ENCODE measurements at regions of chr10 and their contacts with region 1.

Region 1: DNA sequence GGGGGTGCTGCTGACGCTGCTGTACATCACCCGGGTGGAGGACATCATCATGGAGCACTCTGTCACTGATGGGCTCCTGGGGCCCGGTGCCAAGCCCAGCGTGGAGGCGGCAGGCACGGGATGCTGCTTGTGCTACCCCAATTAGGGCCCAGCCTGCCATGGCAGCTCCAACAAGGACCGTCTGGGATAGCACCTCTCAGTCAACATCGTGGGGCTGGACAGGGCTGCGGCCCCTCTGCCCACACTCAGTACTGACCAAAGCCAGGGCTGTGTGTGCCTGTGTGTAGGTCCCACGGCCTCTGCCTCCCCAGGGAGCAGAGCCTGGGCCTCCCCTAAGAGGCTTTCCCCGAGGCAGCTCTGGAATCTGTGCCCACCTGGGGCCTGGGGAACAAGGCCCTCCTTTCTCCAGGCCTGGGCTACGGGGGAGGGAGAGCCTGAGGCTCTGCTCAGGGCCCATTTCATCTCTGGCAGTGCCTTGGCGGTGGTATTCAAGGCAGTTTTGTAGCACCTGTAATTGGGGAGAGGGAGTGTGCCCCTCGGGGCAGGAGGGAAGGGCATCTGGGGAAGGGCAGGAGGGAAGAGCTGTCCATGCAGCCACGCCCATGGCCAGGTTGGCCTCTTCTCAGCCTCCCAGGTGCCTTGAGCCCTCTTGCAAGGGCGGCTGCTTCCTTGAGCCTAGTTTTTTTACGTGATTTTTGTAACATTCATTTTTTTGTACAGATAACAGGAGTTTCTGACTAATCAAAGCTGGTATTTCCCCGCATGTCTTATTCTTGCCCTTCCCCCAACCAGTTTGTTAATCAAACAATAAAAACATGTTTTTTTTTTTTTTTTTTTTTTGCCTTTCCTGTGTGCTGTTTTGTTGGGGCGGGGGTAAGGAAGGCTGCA is 55.8 kb downstream of the TSPAN15 start:
- DNase-seq: peak in 1 of 2 experiments; percentile 27
- ATAC-seq: peak; percentile 42 to 48
- H3K4me3 ChIP-seq: peak overlapping the region; percentile 25; the same call in 2 of the 3 replicates
- H3K27ac ChIP-seq: peak overlapping the region; percentile 65 to 91
- H3K4me1 ChIP-seq: peaks cover 13% of the 10 kb centered on the region
- CTCF ChIP-seq: no peak
- EP300 ChIP-seq: no peak
- POLR2A ChIP-seq: no peak
- RAD21 ChIP-seq: no peak

Region 2: DNA sequence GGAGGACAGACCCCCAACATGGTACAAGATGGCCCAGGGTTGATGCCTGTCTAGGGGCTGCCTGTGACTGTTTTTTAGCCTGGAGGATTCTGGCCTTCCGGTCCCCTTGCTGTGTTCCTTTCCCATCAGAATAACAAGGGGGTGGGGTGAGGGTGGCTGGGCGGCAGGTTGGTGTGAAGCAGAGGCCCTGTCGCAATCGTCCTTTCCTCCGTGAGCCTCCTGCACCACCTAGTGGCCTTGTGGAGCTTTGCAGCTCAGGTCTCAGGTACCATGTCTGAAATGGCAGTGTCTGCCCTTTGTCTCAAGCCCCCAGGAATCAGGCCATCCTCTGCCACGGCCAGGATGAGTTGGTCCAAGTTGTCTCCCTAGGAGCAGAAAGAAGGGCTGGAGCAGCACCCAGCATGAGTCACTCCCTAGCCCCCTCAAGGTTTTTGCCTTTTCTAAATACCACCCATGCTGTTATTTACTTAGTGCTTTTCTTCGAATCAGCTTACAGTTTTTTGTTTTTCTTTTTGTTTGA is 114.5 kb before region 1 on chr10:
- CTCF ChIA-PET with region 1: interaction called, 15 read pairs
- POLR2A ChIA-PET with region 1: no interaction called
- DNase-seq: peak; percentile 85 to 87
- ATAC-seq: peak; percentile 86 to 94
- H3K4me3 ChIP-seq: no peak overlapping the region
- H3K27ac ChIP-seq: peak overlapping the region; percentile 48 to 72; a peak in 4 of 6 replicates
- H3K4me1 ChIP-seq: peaks cover 21% of the 10 kb centered on the region
- CTCF ChIP-seq: peak; percentile 94
- EP300 ChIP-seq: no peak
- POLR2A ChIP-seq: no peak
- RAD21 ChIP-seq: peak; percentile 99

Region 3: DNA sequence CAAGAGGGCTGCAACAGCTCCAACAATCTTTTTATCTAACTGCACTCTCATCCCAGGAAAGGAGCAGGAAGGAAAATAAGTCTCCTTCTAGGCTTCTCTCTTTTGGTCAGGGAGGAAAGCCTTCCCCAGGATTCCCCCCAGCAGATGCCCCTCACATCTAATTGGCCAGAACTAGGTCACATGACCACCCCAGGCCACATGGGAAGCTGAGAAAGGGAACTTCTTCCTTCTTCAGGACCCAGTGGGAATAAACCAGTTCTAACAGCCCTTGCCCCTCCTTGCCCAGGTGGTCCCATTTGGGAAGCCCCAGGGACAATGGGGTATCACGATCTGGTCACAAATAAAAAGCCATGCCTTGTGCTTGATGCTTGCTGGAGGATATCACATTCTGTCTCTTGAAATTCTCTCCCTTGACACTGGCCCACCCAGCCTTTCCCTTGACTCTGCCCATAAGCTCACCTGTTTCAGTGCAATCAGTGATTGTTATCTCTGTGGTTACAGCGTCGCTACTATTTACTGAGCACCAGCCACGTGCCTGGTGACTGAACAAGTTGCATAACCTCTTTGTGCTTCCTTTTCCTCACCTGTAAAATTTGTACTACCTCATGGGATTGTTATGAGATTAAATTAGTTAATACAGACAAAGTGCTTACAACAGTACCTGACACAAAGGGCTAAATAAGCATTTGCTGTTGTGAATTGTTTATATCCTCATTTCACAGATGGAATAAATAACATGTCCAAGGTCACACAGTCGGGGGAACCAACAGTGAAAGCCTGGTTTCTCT is 81.4 kb before region 1 on chr10:
- CTCF ChIA-PET with region 1: interaction called, 90 read pairs
- POLR2A ChIA-PET with region 1: no interaction called
- DNase-seq: no peak
- ATAC-seq: no peak
- H3K4me3 ChIP-seq: no peak overlapping the region
- H3K27ac ChIP-seq: peak overlapping the region; percentile 45 to 50
- H3K4me1 ChIP-seq: peaks cover 20% of the 10 kb centered on the region
- CTCF ChIP-seq: no peak
- EP300 ChIP-seq: no peak
- POLR2A ChIP-seq: no peak
- RAD21 ChIP-seq: no peak

Region 4: DNA sequence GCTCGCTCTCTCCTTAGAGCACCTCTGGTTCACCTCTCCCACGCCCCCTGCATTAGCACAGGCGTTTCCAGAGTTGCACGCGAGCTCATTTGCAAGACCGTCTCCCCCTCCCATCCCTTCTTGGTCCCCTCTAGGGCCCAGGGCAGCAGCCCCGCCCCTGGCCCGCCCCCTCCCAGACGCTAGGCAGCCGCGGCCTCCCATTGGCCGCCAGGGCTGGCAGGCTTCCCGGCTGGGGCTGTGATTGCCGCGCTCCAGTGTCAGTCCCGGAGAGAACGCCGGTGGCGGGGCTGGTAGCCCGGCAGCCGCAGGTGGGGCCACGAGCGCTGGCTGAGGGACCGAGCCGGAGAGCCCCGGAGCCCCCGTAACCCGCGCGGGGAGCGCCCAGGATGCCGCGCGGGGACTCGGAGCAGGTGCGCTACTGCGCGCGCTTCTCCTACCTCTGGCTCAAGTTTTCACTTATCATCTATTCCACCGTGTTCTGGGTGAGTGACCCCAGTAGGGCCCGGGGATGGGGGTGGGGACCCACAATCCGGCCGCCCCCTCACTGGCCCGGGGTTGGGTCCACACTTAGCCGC is 55.8 kb before region 1 on chr10 and contains the start of gene TSPAN15:
- CTCF ChIA-PET with region 1: interaction called, 50 read pairs
- POLR2A ChIA-PET with region 1: interaction called, 5 read pairs
- DNase-seq: peak; percentile 78 to 94
- ATAC-seq: peak; percentile 84 to 85
- H3K4me3 ChIP-seq: peak within 1 kb of the TSS; percentile 78
- H3K27ac ChIP-seq: peak within 1 kb of the TSS; percentile 92 to 94
- H3K4me1 ChIP-seq: peaks cover 74% of the 10 kb centered on the region
- CTCF ChIP-seq: no peak
- EP300 ChIP-seq: no peak
- POLR2A ChIP-seq: peak; percentile 39
- RAD21 ChIP-seq: no peak
- polyA plus RNA-seq, gene TSPAN15: 89.0 and 89.6 TPM in 2 replicates

Region 5: DNA sequence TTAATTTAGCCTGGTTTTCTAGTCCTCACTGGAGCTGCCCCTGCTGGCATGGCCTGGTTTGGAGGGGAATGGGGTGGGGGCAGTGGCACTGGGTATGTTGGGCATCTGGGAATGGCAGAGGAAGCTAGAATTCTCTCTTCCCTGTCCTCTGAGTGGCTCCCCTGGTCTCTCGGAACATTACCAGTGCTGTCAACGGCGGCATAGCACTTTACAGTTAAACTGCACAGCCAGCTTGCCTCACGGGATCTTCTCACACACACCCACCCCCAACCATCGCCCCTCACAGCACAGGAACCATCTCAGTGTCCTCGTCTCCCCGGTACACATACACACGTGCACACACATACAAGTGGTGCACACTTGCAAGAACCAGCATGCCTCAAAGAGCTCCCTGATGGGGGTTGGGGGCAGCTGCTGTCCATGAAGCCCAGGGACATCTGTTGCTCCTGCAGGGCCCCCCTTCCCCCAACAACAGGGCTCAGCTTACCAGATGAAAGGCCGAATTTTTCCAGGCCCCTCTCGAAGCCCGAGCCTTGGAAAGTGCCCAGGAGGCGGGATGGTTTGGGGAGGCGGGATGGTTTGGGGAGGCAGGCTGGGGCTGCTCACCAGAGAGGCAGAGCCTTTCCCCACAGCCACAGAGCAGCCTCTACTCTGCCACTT is 14.9 kb before region 1 on chr10:
- CTCF ChIA-PET with region 1: interaction called, 25 read pairs
- POLR2A ChIA-PET with region 1: interaction called, 3 read pairs
- DNase-seq: no peak
- ATAC-seq: peak in 1 of 2 experiments; percentile 34; a peak in 2 of 6 replicates
- H3K4me3 ChIP-seq: no peak overlapping the region
- H3K27ac ChIP-seq: peak overlapping the region in 1 of 2 experiments; percentile 42; a peak in 2 of 6 replicates
- H3K4me1 ChIP-seq: no peaks in the 10 kb centered on the region
- CTCF ChIP-seq: no peak
- EP300 ChIP-seq: no peak
- POLR2A ChIP-seq: no peak
- RAD21 ChIP-seq: no peak